Left colon (tissue), 2 donors: ENCODE measurements at regions of chr17 and their contacts with region 1.

Region 1: DNA sequence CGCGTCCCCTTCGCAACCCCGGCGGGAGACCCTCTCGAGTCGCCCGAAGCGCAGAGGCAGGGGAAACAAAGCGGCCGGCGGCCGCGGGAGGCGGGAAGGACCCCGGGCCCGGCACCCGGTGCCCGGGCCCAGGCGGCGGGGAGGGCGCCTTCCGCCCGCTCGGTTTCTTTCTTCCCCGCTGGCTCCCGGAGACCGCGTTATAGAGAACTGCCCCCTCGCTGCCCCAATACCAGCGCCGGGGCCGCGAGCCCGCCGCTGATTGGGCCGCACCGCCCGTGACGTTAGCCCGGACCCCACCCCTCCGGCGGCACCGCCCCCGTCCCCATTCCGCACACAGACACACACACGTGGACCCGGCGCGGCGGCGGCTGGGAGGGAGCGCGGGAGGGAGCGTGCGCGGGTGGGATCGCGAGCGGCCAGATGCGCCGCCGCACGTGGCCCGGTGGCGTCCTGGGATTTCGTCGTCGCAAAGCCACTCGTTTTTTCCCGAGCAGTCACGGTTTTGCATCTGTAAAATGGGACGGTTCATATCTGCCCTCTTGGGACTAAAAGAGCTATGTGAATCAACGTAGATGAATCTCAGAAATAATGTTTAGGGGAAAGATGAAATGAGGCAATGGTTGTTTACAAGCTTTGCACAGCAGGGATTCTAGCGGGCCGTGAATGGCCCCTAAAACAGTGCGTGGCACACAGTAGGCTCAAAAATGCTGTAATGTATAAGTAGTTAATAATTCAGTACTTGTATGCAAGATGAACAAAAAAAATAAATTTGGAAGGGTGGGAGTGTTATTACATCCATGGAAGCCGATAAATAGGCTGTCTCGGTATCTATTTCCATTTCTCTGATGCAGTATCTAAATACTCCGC is at the start of gene EPOP:
- DNase-seq: peak; percentile 86 to 88
- ATAC-seq: peak; percentile 86
- total RNA-seq, gene EPOP: 0.22 to 0.46 TPM

Region 2: GRCh38 chr17:38729886-38730525 is 55.0 kb after region 1 on chr17 and contains the start of gene CISD3:
- intact Hi-C with region 1: loop called in 1 of 2 experiments (anchors 5 kb)
- DNase-seq: peak; percentile 85 to 91
- ATAC-seq: peak; percentile 62
- total RNA-seq, gene CISD3: 91.6 to 99.8 TPM